ENCODE measurements at regions of chr7 and their contacts with region 1.

Region 1: GRCh38 chr7:144812379-144813283 is 23.2 kb downstream of the TPK1 start:
- DNase-seq: peak; percentile 64 to 78 (median 72)
- H3K4me3 ChIP-seq: peak overlapping the region in 1 of 2 donors; percentile 2
- H3K4me3 Mint-ChIP-seq: peak overlapping the region; percentile 67 to 84 (median 78)
- H3K27ac ChIP-seq: peak overlapping the region; percentile 46
- H3K27ac Mint-ChIP-seq: peak overlapping the region; percentile 86 to 94 (median 93)
- H3K4me1 ChIP-seq: peaks cover 72% of the 10 kb centered on the region
- H3K4me1 Mint-ChIP-seq: peaks cover 45 to 78% (median 58%) of the 10 kb centered on the region in 4 donors
- H3K27me3 ChIP-seq: no peaks in the 10 kb centered on the region
- H3K27me3 Mint-ChIP-seq: no peaks in the 10 kb centered on the region

Region 2: DNA sequence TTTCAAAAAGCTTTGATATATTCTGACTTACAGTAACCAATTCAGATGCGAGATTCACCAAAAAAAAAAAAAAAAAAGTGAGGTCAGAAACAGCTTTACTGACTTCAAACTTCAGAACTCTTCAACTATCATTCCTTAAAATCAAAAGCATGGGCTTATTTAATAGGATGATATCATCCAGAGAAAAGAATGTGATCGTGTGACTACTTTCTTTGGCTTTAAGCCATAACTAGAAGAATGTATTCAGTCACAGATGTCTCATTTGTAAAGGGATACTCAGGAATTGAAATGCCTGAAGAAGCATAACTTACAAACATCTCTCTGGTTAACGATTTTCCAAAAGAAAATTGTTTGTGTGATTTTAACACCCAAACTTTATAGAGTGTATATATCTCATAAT is 11.7 kb after region 1 on chr7:
- CTCF ChIA-PET with region 1: interaction called, 9 read pairs
- POLR2A ChIA-PET with region 1: interaction called, 13 read pairs
- intact Hi-C with region 1: loop called (anchors 1 kb)
- DNase-seq: no peak
- H3K4me3 ChIP-seq: no peak overlapping the region
- H3K4me3 Mint-ChIP-seq: no peak overlapping the region
- H3K27ac ChIP-seq: no peak overlapping the region
- H3K27ac Mint-ChIP-seq: peak overlapping the region in 1 of 7 donors; percentile 4
- H3K4me1 ChIP-seq: peaks cover 45% of the 10 kb centered on the region
- H3K4me1 Mint-ChIP-seq: peaks cover 47 to 71% (median 57%) of the 10 kb centered on the region in 4 donors
- H3K27me3 ChIP-seq: no peaks in the 10 kb centered on the region
- H3K27me3 Mint-ChIP-seq: no peaks in the 10 kb centered on the region